Activated CD8-positive, alpha-beta T cell treated with anti-CD3 and anti-CD28 coated beads, Interleukin-2, amount 10 ng/mL, durations not matched to agents 7 days and 5 days (primary cell): ENCODE measurements at regions of chr2 and their contacts with region 1.

Region 1: GRCh38 chr2:231900486-231900942 is 25.7 kb downstream of the NPPC start:
- DNase-seq: peak; percentile 64
- ATAC-seq: peak; percentile 76
- H3K4me3 Mint-ChIP-seq: no peak overlapping the region
- H3K27ac Mint-ChIP-seq: no peak overlapping the region
- H3K4me1 Mint-ChIP-seq: no peaks in the 10 kb centered on the region
- H3K27me3 Mint-ChIP-seq: peaks cover 9% of the 10 kb centered on the region

Region 2: DNA sequence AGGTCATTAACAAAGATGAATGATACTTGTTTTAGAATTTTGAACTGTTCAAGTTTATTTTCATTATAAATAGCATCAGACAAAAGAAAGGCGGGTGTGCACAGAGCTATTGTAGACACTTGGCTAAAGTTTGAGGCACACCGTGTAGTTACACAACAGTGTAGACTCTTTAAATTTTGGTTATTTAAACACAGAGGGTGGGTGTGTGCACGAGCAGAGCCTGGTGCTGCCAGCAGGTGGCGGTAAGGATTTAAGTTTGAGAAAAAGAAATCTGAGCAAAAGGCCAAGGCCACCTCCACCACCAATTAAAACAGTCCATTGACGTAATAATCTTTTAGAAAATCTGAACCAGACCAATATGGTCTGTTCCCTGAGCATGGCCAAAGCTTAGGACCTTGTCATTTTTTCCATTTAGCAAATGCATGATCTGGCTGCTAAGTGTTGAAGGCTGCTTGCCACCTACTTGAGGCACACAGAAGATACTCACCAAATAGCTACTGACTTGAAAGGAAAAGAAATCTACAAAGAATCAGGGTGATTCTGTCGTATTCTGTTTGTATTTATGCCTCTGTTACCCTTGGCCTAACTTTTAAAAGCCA is 99.9 kb before region 1 on chr2:
- CTCF ChIA-PET with region 1: interaction called, 10 read pairs
- POLR2A ChIA-PET with region 1: no interaction called
- DNase-seq: peak; percentile 68
- ATAC-seq: peak; percentile 80
- H3K4me3 Mint-ChIP-seq: no peak overlapping the region
- H3K27ac Mint-ChIP-seq: no peak overlapping the region
- H3K4me1 Mint-ChIP-seq: no peaks in the 10 kb centered on the region
- H3K27me3 Mint-ChIP-seq: no peaks in the 10 kb centered on the region

Region 3: GRCh38 chr2:231820786-231821303 is 79.7 kb before region 1 on chr2:
- CTCF ChIA-PET with region 1: no interaction called
- POLR2A ChIA-PET with region 1: no interaction called
- DNase-seq: no peak
- ATAC-seq: no peak
- H3K4me3 Mint-ChIP-seq: no peak overlapping the region
- H3K27ac Mint-ChIP-seq: no peak overlapping the region
- H3K4me1 Mint-ChIP-seq: no peaks in the 10 kb centered on the region
- H3K27me3 Mint-ChIP-seq: peaks cover 2% of the 10 kb centered on the region

Region 4: GRCh38 chr2:231869704-231870103 is 30.8 kb before region 1 on chr2:
- CTCF ChIA-PET with region 1: no interaction called
- POLR2A ChIA-PET with region 1: no interaction called
- DNase-seq: no peak
- ATAC-seq: no peak
- H3K4me3 Mint-ChIP-seq: no peak overlapping the region
- H3K27ac Mint-ChIP-seq: no peak overlapping the region
- H3K4me1 Mint-ChIP-seq: no peaks in the 10 kb centered on the region
- H3K27me3 Mint-ChIP-seq: peaks cover 8% of the 10 kb centered on the region

Region 5: GRCh38 chr2:231883468-231883881 is 17.0 kb before region 1 on chr2:
- CTCF ChIA-PET with region 1: interaction called, 42 read pairs
- POLR2A ChIA-PET with region 1: no interaction called
- DNase-seq: no peak
- ATAC-seq: no peak
- H3K4me3 Mint-ChIP-seq: no peak overlapping the region
- H3K27ac Mint-ChIP-seq: no peak overlapping the region
- H3K4me1 Mint-ChIP-seq: no peaks in the 10 kb centered on the region
- H3K27me3 Mint-ChIP-seq: peaks cover 40% of the 10 kb centered on the region

Region 6: DNA sequence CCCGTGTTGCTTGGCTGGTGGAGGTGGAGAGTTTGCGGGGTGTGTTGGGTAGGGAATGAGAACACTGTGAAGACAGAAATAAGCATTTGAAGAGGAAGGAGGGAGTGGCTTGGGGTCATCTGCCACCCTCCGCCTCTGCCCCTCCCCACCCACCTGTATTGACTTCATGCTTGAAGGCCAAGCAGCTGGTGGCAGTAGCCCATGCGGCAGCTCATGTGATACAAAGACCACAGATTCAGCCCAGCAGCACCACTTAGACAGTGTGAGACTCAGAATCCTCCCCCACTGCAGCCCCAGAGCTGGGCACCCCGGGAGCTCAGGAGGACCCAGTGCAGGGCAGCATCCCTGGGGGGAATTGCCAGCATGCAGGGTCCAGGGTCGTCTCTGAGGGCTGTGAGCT is 10.3 kb after region 1 on chr2:
- CTCF ChIA-PET with region 1: interaction called, 10 read pairs
- POLR2A ChIA-PET with region 1: no interaction called
- DNase-seq: no peak
- ATAC-seq: no peak
- H3K4me3 Mint-ChIP-seq: no peak overlapping the region
- H3K27ac Mint-ChIP-seq: peak overlapping the region; percentile 63
- H3K4me1 Mint-ChIP-seq: peaks cover 33% of the 10 kb centered on the region
- H3K27me3 Mint-ChIP-seq: peaks cover 3% of the 10 kb centered on the region

Region 7: DNA sequence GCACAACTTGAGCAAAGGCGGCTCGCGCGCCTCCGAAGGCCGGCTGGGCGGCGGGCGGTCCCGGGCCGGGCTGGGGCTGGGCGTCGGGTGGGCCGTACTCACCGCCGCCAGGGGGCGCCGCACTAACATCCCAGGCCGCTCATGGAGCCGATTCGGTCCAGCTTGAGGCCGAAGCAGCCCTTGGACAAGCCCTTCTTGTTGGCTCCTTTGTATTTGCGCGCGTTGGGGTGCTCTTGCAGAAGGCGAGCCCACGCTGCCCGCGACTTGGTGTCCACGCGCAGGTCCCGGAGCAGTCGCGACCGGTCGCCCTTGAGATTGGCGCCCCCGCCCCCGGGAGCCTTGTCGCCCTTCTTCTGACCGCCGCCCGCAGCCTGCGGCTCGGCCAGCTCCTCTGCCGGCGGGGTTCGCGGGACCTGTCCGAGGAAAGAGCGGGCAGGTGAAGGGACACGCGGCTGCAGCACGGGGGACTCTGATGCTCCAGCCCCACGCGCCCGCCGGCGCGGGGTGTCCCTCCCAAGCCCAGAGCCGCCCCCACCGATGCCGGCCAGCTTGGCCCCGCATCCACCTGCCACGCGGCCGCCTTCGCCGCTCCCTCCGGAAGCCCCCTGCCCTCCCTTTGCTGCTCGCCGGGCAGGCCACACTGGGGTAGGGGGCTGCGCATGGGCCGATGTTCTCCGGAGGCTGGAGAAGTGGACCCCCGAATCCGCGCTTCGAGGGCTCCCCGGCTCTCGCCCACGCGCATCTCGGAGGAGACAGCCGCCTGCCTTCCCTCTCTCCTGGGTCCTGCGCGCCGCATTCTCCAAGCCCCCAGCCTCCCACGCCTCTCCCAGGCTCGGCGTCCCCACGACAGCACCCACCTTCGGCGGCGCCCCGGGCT is 25.0 kb after region 1 on chr2:
- CTCF ChIA-PET with region 1: interaction called, 10 read pairs
- POLR2A ChIA-PET with region 1: no interaction called
- DNase-seq: peak; percentile 78
- ATAC-seq: peak; percentile 68
- H3K4me3 Mint-ChIP-seq: peak overlapping the region; percentile 60
- H3K27ac Mint-ChIP-seq: no peak overlapping the region
- H3K4me1 Mint-ChIP-seq: peaks cover 14% of the 10 kb centered on the region
- H3K27me3 Mint-ChIP-seq: peaks cover 34% of the 10 kb centered on the region

Region 8: DNA sequence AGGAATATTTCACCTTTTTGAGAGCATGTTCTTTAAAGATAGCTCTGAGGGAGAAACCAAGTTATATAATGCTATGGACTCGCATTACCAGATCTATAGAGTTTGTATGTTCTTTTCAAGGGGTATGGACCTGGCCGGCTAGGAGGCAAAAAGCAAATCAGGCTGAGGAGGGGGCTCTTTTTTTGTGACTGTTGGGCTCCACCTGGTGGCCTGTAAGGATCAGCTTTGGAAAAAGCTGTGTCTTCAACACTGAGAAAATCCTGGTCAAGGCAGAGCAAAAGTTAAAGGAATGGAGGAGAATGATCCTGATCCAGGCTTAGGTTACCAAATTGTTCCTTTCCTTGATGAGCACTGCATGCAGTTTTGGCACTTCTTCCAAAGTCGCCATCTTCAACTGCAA is 241.5 kb after region 1 on chr2:
- CTCF ChIA-PET with region 1: interaction called, 21 read pairs
- POLR2A ChIA-PET with region 1: no interaction called
- DNase-seq: peak; percentile 46
- ATAC-seq: no peak
- H3K4me3 Mint-ChIP-seq: no peak overlapping the region
- H3K27ac Mint-ChIP-seq: no peak overlapping the region
- H3K4me1 Mint-ChIP-seq: peaks cover 27% of the 10 kb centered on the region
- H3K27me3 Mint-ChIP-seq: no peaks in the 10 kb centered on the region